Activated CD8-positive, alpha-beta T cell treated with anti-CD3 and anti-CD28 coated beads, Interleukin-2, amount 10 ng/mL, durations not matched to agents 7 days and 5 days (primary cell): ENCODE measurements at regions of chr17 and their contacts with region 1.

Region 1: DNA sequence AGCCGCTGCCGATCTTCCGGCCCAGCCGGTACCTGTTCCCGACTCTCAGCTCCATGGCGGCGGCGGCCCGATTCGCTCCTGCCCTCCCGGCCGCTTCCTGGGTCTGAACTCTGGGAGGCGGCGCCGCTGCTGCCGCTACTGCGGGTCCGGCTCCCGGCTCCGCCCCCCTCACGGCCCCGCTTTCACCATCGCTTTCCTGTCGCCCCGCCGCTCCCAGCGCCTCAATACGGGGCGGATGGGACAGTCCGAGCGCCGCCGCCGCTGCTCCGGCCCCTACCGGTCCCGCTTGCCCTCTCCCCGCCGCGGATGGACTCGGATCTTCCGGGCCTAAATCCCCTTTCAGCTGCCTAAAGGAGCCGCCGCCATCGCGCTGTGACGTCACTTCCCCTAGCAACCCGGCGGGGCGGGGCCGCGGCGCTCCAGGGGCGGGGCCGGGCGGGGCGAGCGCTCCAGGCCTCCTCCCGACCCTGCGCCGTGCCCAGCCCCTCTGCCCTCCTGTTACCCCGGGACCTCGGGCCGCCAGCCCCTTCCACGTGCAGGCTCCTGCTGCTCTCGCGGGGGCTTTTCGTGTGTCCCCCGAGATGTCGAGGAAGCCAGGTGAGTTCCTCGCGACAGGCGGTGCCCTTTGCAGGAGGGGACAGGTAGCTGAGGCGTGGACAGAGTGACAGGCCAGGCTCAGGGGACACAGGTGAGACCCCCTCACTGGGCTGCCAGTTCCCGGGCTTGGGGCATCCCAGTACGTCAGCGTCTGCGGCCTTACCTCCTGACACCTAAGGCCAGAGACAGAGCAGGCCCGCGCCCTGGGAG is at the start of gene CSNK1D:
- DNase-seq: peak; percentile 93
- ATAC-seq: peak; percentile 85
- H3K4me3 Mint-ChIP-seq: peak within 1 kb of the TSS; percentile 86
- H3K27ac Mint-ChIP-seq: peak within 1 kb of the TSS; percentile 99
- H3K4me1 Mint-ChIP-seq: peaks cover 38% of the 10 kb centered on the region
- H3K27me3 Mint-ChIP-seq: peaks cover 1% of the 10 kb centered on the region
- total RNA-seq, gene CSNK1D: 99.5 to 111 TPM

Region 2: GRCh38 chr17:82292251-82293154 is 19.0 kb after region 1 on chr17:
- CTCF ChIA-PET with region 1: interaction called, 8 read pairs
- POLR2A ChIA-PET with region 1: interaction called, 26 read pairs
- DNase-seq: peak; percentile 97
- ATAC-seq: peak; percentile 96
- H3K4me3 Mint-ChIP-seq: peak overlapping the region; percentile 80
- H3K27ac Mint-ChIP-seq: peak overlapping the region; percentile 88
- H3K4me1 Mint-ChIP-seq: peaks cover 47% of the 10 kb centered on the region
- H3K27me3 Mint-ChIP-seq: no peaks in the 10 kb centered on the region